ENCODE measurements at regions of chr17 and their contacts with region 1.

Region 1: GRCh38 chr17:34902831-34903547 is 58.3 kb downstream of the CCT6B start:
- DNase-seq: no peak
- ATAC-seq: no peak
- H3K4me3 ChIP-seq: no peak overlapping the region
- H3K27ac ChIP-seq: no peak overlapping the region
- H3K4me1 ChIP-seq: no peaks in the 10 kb centered on the region
- H3K27me3 ChIP-seq: peaks cover 0 to 6% (median 0%) of the 10 kb centered on the region in 3 donors
- CTCF ChIP-seq: no peak
- POLR2A ChIP-seq: no peak

Region 2: DNA sequence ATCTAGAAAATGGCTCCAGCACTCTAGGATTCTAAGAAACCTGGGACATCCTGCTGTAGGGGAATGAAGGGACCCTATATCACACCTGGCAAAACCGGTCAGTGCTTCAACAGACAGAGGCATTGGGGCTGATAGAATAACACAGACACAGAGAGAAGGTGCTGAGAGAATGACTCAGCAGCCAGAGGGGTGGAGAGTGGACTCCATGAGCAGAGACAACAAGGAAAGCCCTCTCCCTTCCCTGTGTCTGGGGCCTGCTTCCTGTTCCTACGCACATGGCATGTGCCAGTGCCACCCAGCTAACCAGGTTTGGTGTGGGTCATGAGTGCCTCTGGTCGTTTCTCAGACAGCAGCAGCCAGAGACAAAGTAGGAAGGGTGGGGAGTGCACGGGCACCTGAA is 82.1 kb before region 1 on chr17:
- in situ Hi-C with region 1: loop called in 1 of 4 experiments (anchors 25 kb)
- intact Hi-C with region 1: no loop called
- DNase-seq: no peak
- ATAC-seq: no peak
- H3K4me3 ChIP-seq: no peak overlapping the region
- H3K27ac ChIP-seq: no peak overlapping the region
- H3K4me1 ChIP-seq: no peaks in the 10 kb centered on the region
- H3K27me3 ChIP-seq: no peaks in the 10 kb centered on the region
- CTCF ChIP-seq: no peak
- POLR2A ChIP-seq: no peak

Region 3: DNA sequence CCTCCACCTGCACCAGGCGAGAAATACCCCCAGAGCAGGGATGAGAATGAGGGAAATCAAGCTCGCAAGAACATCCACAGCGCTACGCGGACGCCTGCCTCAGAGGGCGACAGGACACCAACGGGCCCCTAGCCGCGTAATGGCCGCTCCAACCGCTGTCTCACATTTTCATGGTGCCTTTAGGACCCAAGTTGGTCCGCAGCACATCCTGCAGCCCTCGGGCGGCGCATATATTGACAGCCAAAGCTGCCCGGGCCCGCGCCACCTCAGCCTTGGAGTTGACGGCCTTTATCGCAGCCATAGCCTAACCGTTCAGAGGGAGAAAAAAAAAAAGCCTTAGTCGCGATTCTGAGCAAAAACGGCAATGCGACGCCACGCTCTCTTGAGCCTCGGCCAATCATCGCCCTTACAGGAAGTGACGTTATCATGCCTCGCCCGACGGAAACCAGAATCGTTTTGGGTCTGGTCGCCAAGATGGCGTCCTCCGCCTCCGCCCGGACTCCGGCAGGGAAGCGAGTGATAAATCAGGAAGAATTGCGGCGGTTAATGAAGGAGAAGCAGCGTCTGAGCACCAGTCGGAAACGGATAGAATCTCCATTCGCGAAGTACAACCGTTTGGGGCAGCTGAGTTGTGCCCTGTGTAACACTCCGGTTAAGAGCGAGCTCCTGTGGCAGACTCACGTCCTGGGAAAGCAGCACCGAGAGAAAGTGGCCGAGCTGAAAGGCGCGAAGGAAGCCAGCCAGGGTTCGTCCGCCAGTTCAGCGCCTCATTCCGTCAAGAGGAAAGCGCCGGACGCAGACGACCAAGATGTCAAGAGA is 58.3 kb after region 1 on chr17 and contains the starts of genes CCT6B and ZNF830:
- in situ Hi-C with region 1: no loop called
- intact Hi-C with region 1: no loop called
- DNase-seq: peak; percentile 86 to 89
- ATAC-seq: peak; percentile 99 to 100
- H3K4me3 ChIP-seq: peak within 1 kb of the TSS; percentile 77 to 97 (median 92)
- H3K27ac ChIP-seq: peak within 1 kb of the TSS; percentile 90 to 98 (median 93)
- H3K4me1 ChIP-seq: peaks cover 23 to 26% of the 10 kb centered on the region in 2 donors
- H3K27me3 ChIP-seq: no peaks in the 10 kb centered on the region
- CTCF ChIP-seq: no peak
- POLR2A ChIP-seq: peak; percentile 51 to 60
- total RNA-seq, gene CCT6B: 1.4 to 5.4 (median 2.8) TPM
- total RNA-seq, gene ZNF830: 6.0 to 11.0 (median 7.2) TPM

Region 4: DNA sequence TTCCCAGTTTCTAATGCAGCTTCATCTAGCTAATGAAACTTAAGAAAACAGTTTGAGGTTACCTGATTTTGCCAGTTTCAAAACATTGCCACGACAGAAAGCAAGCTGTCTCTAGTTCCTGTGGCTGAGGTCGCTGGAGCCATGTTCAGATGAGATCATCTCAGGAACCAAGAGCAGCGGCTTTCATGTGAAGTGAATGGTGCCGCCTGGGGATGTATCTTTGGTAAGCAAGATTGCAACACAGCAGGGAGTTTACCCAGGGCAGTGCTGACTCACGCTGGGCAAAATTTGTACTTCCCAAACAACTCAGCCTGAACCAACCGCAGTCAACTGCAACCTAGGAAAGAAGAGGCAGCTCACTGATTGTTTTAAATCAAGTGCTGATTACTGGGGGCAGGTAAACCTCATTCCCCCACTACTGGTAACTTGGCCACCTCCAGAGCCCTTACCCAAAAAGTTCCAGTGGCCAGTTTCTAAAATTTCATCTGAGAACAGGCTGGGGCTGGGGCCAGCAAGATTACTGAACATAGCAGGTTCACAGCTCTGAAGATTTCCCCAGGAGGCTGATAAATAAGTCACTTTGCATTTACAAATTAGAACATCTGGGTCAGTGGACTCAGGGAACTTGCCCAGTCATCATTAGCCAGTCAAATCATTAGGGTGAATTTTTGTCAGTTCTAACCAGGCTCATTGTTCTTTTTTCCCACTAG is 160.7 kb after region 1 on chr17 and contains the start of gene RFFL:
- in situ Hi-C with region 1: no loop called
- intact Hi-C with region 1: no loop called
- DNase-seq: peak; percentile 93 to 95
- ATAC-seq: peak; percentile 99 to 100
- H3K4me3 ChIP-seq: peak within 1 kb of the TSS; percentile 47 to 57 (median 54)
- H3K27ac ChIP-seq: peak within 1 kb of the TSS; percentile 87 to 97 (median 90)
- H3K4me1 ChIP-seq: peaks cover 13 to 30% of the 10 kb centered on the region in 2 donors
- H3K27me3 ChIP-seq: no peaks in the 10 kb centered on the region
- CTCF ChIP-seq: peak in 1 of 5 experiments; percentile 13
- POLR2A ChIP-seq: peak; percentile 59 to 75
- total RNA-seq, gene RFFL: 17.4 to 65.7 (median 35.0) TPM